Calu3 (cell line): ENCODE measurements at regions of chr2 and their contacts with region 1.

Region 1: GRCh38 chr2:201071479-201072200 is at the starts of genes HYCC2 and NDUFB3:
- DNase-seq: peak; percentile 93
- H3K4me3 Mint-ChIP-seq: peak within 1 kb of the TSS; percentile 90
- H3K27ac Mint-ChIP-seq: peak within 1 kb of the TSS; percentile 97
- H3K4me1 Mint-ChIP-seq: peaks cover 31% of the 10 kb centered on the region
- H3K27me3 Mint-ChIP-seq: no peaks in the 10 kb centered on the region
- CTCF ChIP-seq: peak; percentile 18
- total RNA-seq, gene HYCC2: 37.5 and 45.6 TPM in 2 replicates
- total RNA-seq, gene NDUFB3: 133 and 140 TPM in 2 replicates

Region 2: GRCh38 chr2:200901459-200902072 is 170.1 kb before region 1 on chr2:
- CTCF ChIA-PET with region 1: interaction called, 27 read pairs
- intact Hi-C with region 1: loop called (anchors 1 kb)
- DNase-seq: peak; percentile 75
- H3K4me3 Mint-ChIP-seq: no peak overlapping the region
- H3K27ac Mint-ChIP-seq: no peak overlapping the region
- H3K4me1 Mint-ChIP-seq: peaks cover 8% of the 10 kb centered on the region
- H3K27me3 Mint-ChIP-seq: no peaks in the 10 kb centered on the region
- CTCF ChIP-seq: peak; percentile 85

Region 3: GRCh38 chr2:200963124-200963917 is 108.3 kb before region 1 on chr2 and contains the start of gene ORC2:
- CTCF ChIA-PET with region 1: interaction called, 30 read pairs
- intact Hi-C with region 1: loop called (anchors 1 kb)
- DNase-seq: peak; percentile 97
- H3K4me3 Mint-ChIP-seq: peak within 1 kb of the TSS; percentile 90
- H3K27ac Mint-ChIP-seq: peak within 1 kb of the TSS; percentile 88
- H3K4me1 Mint-ChIP-seq: peaks cover 48% of the 10 kb centered on the region
- H3K27me3 Mint-ChIP-seq: no peaks in the 10 kb centered on the region
- CTCF ChIP-seq: peak; percentile 77
- total RNA-seq, gene ORC2: 38.8 and 49.6 TPM in 2 replicates

Region 4: DNA sequence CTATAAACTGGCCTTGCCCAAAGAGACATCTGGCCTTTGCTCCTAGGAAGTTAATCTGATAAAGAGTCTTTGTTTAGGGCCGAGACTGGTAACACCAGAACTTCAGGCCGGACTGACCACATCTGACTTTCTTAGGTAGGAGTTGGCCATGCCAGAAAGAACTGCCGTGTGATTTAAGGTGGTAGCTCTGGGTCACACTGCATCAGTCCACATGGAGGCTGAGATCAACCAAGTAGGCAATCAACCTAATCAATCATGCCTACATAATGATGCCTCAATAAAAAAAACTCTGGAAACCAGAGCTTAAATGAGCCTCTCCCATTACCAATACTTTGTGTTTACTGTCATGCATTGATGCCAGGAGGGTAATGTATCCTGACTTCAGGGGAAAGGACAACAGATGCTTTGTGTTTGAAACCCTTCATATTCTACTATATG is 64.1 kb before region 1 on chr2:
- CTCF ChIA-PET with region 1: interaction called, 10 read pairs
- intact Hi-C with region 1: loop called (anchors 2 kb)
- DNase-seq: peak; percentile 64
- H3K4me3 Mint-ChIP-seq: peak overlapping the region; percentile 26
- H3K27ac Mint-ChIP-seq: peak overlapping the region; percentile 74
- H3K4me1 Mint-ChIP-seq: peaks cover 24% of the 10 kb centered on the region
- H3K27me3 Mint-ChIP-seq: no peaks in the 10 kb centered on the region
- CTCF ChIP-seq: no peak

Region 5: GRCh38 chr2:201116115-201116958 is 44.7 kb after region 1 on chr2 and contains the start of gene CFLAR:
- CTCF ChIA-PET with region 1: no interaction called
- intact Hi-C with region 1: no loop called
- DNase-seq: peak; percentile 82
- H3K4me3 Mint-ChIP-seq: peak within 1 kb of the TSS; percentile 71
- H3K27ac Mint-ChIP-seq: peak within 1 kb of the TSS; percentile 99
- H3K4me1 Mint-ChIP-seq: peaks cover 29% of the 10 kb centered on the region
- H3K27me3 Mint-ChIP-seq: no peaks in the 10 kb centered on the region
- CTCF ChIP-seq: no peak
- total RNA-seq, gene CFLAR: 232 and 285 TPM in 2 replicates

Region 6: GRCh38 chr2:201158111-201158929 is 86.7 kb after region 1 on chr2:
- CTCF ChIA-PET with region 1: interaction called, 6 read pairs
- intact Hi-C with region 1: loop called (anchors 1 kb)
- DNase-seq: peak; percentile 78
- H3K4me3 Mint-ChIP-seq: no peak overlapping the region
- H3K27ac Mint-ChIP-seq: peak overlapping the region; percentile 72
- H3K4me1 Mint-ChIP-seq: peaks cover 14% of the 10 kb centered on the region
- H3K27me3 Mint-ChIP-seq: no peaks in the 10 kb centered on the region
- CTCF ChIP-seq: peak; percentile 64

Region 7: GRCh38 chr2:201194097-201194496 is 122.5 kb after region 1 on chr2:
- CTCF ChIA-PET with region 1: no interaction called
- intact Hi-C with region 1: no loop called
- DNase-seq: no peak
- H3K4me3 Mint-ChIP-seq: no peak overlapping the region
- H3K27ac Mint-ChIP-seq: no peak overlapping the region
- H3K4me1 Mint-ChIP-seq: no peaks in the 10 kb centered on the region
- H3K27me3 Mint-ChIP-seq: no peaks in the 10 kb centered on the region
- CTCF ChIP-seq: no peak